Psoas muscle (tissue), 8 donors: ENCODE measurements at regions of chr14 and their contacts with region 1.

Region 1: GRCh38 chr14:64823305-64823861 is 56.3 kb downstream of the SPTB start:
- DNase-seq: peak; percentile 83 to 91
- ATAC-seq: peak; percentile 36 to 64 (median 47)
- H3K4me3 ChIP-seq: peak overlapping the region; percentile 60
- H3K27ac ChIP-seq: peak overlapping the region; percentile 96
- H3K4me1 ChIP-seq: peaks cover 38% of the 10 kb centered on the region
- H3K27me3 ChIP-seq: no peaks in the 10 kb centered on the region
- CTCF ChIP-seq: peak; percentile 70

Region 2: GRCh38 chr14:64841121-64841651 is 17.8 kb after region 1 on chr14:
- intact Hi-C with region 1: loop called in 1 of 2 experiments (anchors 2 kb)
- DNase-seq: peak; percentile 63 to 84
- ATAC-seq: peak; percentile 76 to 82 (median 81)
- H3K4me3 ChIP-seq: peak overlapping the region; percentile 40
- H3K27ac ChIP-seq: peak overlapping the region; percentile 96
- H3K4me1 ChIP-seq: peaks cover 91% of the 10 kb centered on the region
- H3K27me3 ChIP-seq: no peaks in the 10 kb centered on the region
- CTCF ChIP-seq: peak; percentile 68

Region 3: GRCh38 chr14:64879635-64880220 is 56.3 kb after region 1 on chr14 and contains the start of gene SPTB:
- intact Hi-C with region 1: loop called (anchors 1 to 5 kb)
- DNase-seq: peak; percentile 79 to 89
- ATAC-seq: peak; percentile 86 to 92 (median 88)
- H3K4me3 ChIP-seq: peak within 1 kb of the TSS; percentile 92
- H3K27ac ChIP-seq: peak within 1 kb of the TSS; percentile 98
- H3K4me1 ChIP-seq: peaks cover 25% of the 10 kb centered on the region
- H3K27me3 ChIP-seq: no peaks in the 10 kb centered on the region
- CTCF ChIP-seq: no peak
- total RNA-seq, gene SPTB: 374 to 540 (median 492) TPM

Region 4: DNA sequence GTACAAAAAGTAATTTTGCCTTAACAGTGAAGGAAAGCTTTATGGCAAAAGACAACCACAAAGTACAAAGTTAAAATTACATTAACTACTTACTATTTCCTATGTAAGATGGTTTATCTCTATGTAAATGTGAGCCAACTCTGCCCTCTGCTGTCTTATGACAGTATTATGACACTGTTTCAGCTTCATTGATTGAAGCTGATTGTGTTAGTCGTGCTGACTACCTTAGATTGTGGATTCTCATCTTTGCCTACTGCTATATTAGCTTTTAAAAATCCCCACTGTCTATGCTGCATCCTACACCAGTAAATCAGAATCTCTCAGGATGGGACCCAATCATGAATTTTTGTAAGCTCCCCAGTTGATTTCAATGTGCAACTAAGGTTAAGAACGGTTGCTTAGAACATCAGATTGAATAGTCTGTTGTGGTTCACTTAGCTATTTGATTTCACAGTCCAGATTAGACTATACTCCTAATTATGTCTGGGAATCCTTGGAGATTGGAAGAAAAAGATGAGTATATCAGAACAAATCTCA is 68.5 kb after region 1 on chr14:
- intact Hi-C with region 1: loop called in 1 of 2 experiments (anchors 5 kb)
- DNase-seq: no peak
- ATAC-seq: peak; percentile 94 to 98 (median 95)
- H3K4me3 ChIP-seq: no peak overlapping the region
- H3K27ac ChIP-seq: peak overlapping the region; percentile 13
- H3K4me1 ChIP-seq: peaks cover 9% of the 10 kb centered on the region
- H3K27me3 ChIP-seq: no peaks in the 10 kb centered on the region
- CTCF ChIP-seq: peak; percentile 72